Activated T-helper 1 cell treated with anti-CD3 and anti-CD28 coated beads, Interleukin-12 subunit alpha, Interleukin-12 subunit beta, Interleukin-2, Interleukin-4 antibody, amounts not matched to agents 30 ng/mL and 10 ng/mL and 1 ng/mL, durations not matched to agents 14 hours and 24 hours and 36 hours (primary cell): ENCODE measurements at regions of chr12 and their contacts with region 1.

Region 1: DNA sequence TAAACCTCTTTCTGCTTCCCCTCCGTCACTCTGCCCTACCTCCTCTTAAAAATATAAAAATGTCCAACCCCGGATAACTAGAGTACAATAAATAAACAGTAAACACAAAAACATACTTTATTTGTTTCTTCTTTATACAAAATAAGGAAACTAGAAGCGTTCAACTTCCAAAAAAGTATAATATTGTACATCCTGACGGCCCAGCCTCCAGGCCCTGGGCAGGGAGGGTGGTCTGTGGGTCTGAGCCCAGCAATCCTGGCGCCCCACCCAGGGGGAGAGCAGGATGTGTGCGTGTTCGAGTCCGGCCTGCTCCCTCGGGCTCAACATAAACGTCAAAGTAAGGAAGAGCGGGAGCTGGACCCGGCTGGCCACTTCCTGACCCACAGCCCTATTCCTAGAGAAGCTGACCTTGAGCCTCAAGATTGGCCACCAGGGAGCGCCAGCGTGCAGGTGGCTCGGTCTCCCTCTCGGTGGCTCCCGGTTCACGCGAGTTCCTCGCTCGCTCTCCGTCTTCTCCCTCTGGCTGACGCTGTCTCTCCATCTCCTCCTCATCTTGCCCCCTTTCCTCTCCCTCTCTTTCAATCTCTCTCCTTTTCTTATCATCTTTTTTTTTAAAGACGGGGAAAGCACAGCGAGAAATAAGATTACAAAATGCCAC is 9.4 kb downstream of the LHX5 start:
- DNase-seq: peak; percentile 44
- H3K4me3 Mint-ChIP-seq: peak overlapping the region; percentile 67
- H3K27ac Mint-ChIP-seq: peak overlapping the region; percentile 58
- H3K4me1 Mint-ChIP-seq: peaks cover 11% of the 10 kb centered on the region
- H3K27me3 Mint-ChIP-seq: peaks cover 51% of the 10 kb centered on the region

Region 2: DNA sequence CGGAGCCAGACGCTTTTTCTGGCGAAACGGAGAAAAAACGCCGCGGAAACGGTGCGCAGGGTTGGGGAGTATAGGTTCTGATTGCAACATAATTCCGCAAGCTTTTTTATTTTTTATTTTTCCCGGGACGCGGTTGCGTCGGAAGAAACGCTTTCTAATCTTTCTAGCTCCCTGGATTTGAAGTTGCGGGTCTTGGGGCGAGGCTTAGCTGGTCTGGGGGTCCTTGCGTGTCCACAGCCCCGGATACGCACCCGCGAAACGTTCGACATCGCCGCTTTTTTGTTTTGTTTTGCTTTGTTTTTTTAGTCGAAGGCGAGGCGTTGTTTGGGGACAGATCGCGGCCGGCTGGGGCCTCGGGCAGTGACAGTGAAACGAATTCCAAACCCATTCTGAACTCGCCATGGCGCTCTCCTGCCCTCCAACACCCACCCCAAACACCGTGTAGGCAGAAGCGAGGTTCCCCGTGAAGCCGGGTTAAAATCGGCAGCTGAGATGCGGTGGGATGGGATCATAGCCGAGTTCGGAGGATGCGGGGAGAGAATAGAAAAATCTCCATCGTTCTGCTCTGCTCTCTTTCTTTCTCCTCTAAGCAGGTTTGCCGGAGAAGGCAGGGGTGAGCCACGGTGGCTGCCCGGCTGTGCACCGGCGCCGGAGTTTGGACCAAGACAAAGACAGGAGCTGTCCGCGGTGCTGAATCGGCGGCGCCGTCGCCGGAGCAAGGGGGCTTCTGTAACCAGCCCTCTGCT is 17.5 kb after region 1 on chr12:
- intact Hi-C with region 1: loop called (anchors 1 kb)
- DNase-seq: peak; percentile 10
- H3K4me3 Mint-ChIP-seq: no peak overlapping the region
- H3K27ac Mint-ChIP-seq: peak overlapping the region; percentile 74
- H3K4me1 Mint-ChIP-seq: peaks cover 5% of the 10 kb centered on the region
- H3K27me3 Mint-ChIP-seq: peaks cover 55% of the 10 kb centered on the region

Region 3: DNA sequence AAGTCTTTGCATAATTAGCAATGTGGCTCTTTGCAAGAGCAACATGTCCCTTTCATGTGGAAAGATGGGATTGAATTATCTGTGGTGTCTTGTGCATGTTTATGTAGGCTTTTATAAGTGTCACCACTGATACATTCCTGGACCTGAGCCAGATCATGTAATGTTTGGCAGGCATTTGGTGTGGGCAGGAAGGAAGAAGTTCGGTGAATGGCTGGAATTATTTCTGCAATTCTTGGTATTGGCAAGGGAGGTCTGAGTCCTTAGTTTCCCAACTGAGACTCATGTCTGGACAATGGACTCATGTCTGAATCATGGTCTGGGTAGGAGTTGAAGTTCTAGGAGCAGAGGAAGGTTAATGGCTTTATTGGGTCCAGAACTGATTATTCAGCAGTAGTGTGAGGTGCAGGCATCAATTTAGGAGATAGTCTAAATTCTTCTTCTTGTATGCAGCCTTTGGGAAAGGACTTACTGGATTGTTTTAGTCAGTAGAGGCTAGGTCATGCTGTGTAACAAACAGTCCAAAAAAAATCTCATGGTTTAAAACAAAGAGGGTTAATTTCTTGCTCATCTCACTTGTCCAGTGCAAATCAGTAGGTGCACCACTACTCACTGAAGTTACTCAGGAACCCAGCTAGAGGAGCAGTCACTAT is 195.9 kb after region 1 on chr12:
- intact Hi-C with region 1: no loop called
- DNase-seq: no peak
- H3K4me3 Mint-ChIP-seq: no peak overlapping the region
- H3K27ac Mint-ChIP-seq: no peak overlapping the region
- H3K4me1 Mint-ChIP-seq: no peaks in the 10 kb centered on the region
- H3K27me3 Mint-ChIP-seq: peaks cover 2% of the 10 kb centered on the region

Region 4: DNA sequence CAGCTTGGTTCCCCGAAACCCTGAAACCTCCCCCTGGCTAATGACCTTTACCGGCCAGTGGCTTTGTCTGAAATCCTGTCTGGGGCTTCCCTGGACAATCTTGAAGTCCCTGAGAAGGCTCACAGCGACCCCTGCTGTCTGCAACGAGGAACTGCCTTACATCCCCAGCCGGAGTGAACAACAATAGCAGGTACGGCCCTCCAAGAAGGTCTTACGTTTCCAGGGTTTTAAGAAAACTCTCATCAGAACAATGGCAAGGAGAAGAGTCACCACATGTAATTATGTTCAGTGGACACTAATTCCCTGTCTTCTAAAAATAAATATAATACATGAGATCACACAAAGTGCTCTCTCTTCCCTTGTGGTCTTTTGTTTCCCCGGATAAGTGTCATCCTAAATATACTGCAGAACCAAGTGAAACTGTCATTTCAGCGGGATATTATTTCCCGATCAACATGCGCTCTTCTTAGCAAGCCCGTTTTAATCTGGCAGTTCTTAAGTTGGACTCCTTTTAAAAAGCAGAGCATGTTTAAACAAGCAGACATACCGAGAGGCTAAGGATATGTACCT is 450.6 kb after region 1 on chr12:
- intact Hi-C with region 1: loop called (anchors 1 kb)
- DNase-seq: peak; percentile 15
- H3K4me3 Mint-ChIP-seq: no peak overlapping the region
- H3K27ac Mint-ChIP-seq: no peak overlapping the region
- H3K4me1 Mint-ChIP-seq: no peaks in the 10 kb centered on the region
- H3K27me3 Mint-ChIP-seq: no peaks in the 10 kb centered on the region

Region 5: GRCh38 chr12:114131824-114132223 is 669.6 kb after region 1 on chr12:
- intact Hi-C with region 1: no loop called
- DNase-seq: no peak
- H3K4me3 Mint-ChIP-seq: no peak overlapping the region
- H3K27ac Mint-ChIP-seq: no peak overlapping the region
- H3K4me1 Mint-ChIP-seq: no peaks in the 10 kb centered on the region
- H3K27me3 Mint-ChIP-seq: no peaks in the 10 kb centered on the region

Region 6: DNA sequence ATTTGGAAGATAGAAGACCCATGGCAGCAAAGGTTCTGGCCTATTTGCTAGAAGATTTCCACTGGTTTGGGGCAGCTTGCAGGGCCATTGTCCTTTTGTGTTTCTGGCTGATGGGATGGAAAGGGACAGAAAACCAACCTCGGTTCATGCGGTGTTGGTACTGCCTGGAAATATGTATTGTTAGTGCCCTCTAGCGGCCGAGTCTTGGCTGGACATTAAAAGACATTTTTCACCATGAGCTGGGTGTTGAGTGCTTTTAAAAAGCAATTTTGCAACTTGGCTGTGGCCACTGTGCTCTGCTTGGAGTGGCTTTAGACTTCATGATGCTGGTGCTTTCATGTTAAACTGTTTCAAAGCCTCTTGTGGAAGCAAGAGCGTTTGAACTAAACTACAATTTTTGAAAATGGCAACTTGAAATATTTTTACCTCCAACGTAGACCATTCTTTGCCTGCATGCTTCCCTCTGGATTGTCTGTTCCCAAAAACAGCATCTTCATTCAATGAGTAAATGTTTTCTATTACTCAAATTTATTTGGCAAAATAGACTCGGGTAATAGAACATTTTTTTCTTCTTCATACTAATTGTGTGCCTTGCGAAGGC is 1046.4 kb after region 1 on chr12:
- intact Hi-C with region 1: loop called (anchors 5 kb)
- DNase-seq: peak; percentile 33
- H3K4me3 Mint-ChIP-seq: no peak overlapping the region
- H3K27ac Mint-ChIP-seq: no peak overlapping the region
- H3K4me1 Mint-ChIP-seq: no peaks in the 10 kb centered on the region
- H3K27me3 Mint-ChIP-seq: peaks cover 4% of the 10 kb centered on the region